Activated naive CD4-positive, alpha-beta T cell treated with anti-CD3 and anti-CD28 coated beads for 36 hours (primary cell): ENCODE measurements at regions of chr1 and their contacts with region 1.

Region 1: DNA sequence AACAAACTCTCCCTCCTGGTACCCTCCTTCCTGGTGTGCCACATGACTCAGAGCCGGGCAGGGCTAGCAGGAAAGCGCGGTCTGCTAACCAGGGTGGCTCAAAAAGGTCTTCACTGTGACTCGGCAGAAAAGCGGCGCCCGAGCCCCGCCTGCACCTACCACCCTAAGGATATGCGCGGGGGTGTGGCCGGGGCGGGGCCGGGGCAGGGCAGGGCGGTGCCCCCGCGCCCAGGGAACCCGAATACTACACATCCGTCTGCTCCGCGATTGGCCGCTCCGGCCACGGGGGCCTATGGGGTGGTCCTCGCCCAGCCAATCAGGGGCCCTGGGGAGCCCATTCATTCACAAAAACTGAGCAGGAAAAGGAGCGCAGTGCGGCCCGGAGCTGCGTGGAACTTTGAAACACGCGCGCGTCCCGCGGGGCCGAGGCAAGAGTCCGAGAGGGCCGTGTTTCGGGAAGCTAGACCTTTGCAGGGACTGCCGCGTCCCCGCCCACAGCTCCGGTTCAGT is 1.7 kb downstream of the LRP8 start:
- DNase-seq: peak; percentile 96
- H3K4me3 Mint-ChIP-seq: peak overlapping the region; percentile 95
- H3K27ac Mint-ChIP-seq: peak overlapping the region; percentile 94
- H3K4me1 Mint-ChIP-seq: peaks cover 18% of the 10 kb centered on the region
- H3K27me3 Mint-ChIP-seq: no peaks in the 10 kb centered on the region

Region 2: DNA sequence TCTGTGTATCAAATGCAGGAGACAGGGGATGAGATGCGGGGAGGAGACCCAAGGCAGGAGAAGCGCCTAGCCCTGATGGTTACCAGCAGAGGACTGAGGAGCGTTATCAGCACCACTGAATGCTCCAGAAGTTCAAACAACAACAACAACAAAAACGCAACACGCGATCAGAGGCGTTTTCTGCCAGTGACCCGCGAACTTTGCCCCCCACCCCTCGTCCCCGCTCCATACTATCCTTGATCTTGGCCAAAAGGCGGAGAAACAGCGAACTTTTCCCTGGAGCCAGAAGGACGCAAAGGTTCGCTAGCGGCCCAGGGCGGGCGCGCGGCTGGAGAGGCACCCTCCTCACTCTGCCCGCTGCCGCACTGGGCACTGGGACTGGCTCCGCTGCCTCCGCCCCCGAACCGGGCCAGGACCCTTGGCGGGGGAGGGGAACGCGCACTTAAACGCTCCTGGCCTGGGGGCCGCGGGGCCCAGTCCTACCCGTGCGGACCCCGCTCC is 405.3 kb before region 1 on chr1:
- CTCF ChIA-PET with region 1: no interaction called
- intact Hi-C with region 1: loop called (anchors 2 kb)
- DNase-seq: no peak
- H3K4me3 Mint-ChIP-seq: peak overlapping the region; percentile 78
- H3K27ac Mint-ChIP-seq: no peak overlapping the region
- H3K4me1 Mint-ChIP-seq: peaks cover 27% of the 10 kb centered on the region
- H3K27me3 Mint-ChIP-seq: no peaks in the 10 kb centered on the region

Region 3: DNA sequence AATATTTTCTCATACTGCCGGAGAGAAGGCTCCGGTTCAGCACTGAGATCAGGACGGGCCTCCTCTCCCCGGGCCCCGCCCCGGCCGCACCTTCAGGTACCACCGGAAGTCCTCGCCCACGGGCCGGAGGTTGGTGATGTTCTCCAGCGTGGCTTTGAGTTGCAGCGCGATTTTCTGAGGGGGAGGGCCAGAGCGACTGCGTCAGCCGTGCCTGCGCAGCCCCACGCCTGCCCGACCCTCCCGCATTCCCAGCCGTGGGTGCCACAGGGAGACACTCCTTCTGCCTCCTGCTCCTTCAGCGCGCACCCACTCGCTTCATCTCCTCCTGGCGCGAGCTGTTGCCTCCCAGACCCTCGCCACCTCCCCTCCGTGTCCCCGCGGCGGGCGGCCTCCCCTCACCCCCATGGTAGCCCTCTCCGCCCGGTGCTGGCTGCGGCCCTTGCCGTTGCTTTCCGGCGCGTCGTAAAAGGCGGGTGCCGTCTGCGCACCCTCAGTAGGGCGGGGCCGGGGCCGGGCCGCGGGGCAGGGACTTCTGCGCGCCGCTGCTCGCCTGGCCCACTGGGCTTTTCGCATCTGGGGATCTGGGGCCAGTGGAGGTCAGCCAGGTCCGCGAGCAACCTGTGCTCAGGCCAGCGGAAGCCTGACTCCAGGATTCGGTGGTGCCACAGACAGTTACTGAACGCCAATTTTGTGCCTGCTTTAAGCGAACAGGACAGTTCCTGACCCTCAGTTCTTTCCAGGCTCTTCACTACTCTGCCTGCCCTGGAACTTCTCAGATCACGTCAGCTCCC is 105.8 kb before region 1 on chr1 and contains the start of gene CZIB:
- CTCF ChIA-PET with region 1: no interaction called
- intact Hi-C with region 1: loop called (anchors 1 kb)
- DNase-seq: peak; percentile 96
- H3K4me3 Mint-ChIP-seq: peak within 1 kb of the TSS; percentile 91
- H3K27ac Mint-ChIP-seq: peak within 1 kb of the TSS; percentile 95
- H3K4me1 Mint-ChIP-seq: peaks cover 24% of the 10 kb centered on the region
- H3K27me3 Mint-ChIP-seq: no peaks in the 10 kb centered on the region
- total RNA-seq, gene CZIB: 44.4 to 45.6 TPM

Region 4: GRCh38 chr1:53294567-53294966 is 31.6 kb before region 1 on chr1:
- CTCF ChIA-PET with region 1: no interaction called
- intact Hi-C with region 1: loop called (anchors 1 kb)
- DNase-seq: peak; percentile 80
- H3K4me3 Mint-ChIP-seq: no peak overlapping the region
- H3K27ac Mint-ChIP-seq: peak overlapping the region; percentile 41
- H3K4me1 Mint-ChIP-seq: peaks cover 27% of the 10 kb centered on the region
- H3K27me3 Mint-ChIP-seq: no peaks in the 10 kb centered on the region

Region 5: GRCh38 chr1:53393325-53393792 is 67.2 kb after region 1 on chr1:
- CTCF ChIA-PET with region 1: interaction called, 9 read pairs
- intact Hi-C with region 1: loop called (anchors 1 kb)
- DNase-seq: peak; percentile 75
- H3K4me3 Mint-ChIP-seq: no peak overlapping the region
- H3K27ac Mint-ChIP-seq: no peak overlapping the region
- H3K4me1 Mint-ChIP-seq: no peaks in the 10 kb centered on the region
- H3K27me3 Mint-ChIP-seq: no peaks in the 10 kb centered on the region

Region 6: DNA sequence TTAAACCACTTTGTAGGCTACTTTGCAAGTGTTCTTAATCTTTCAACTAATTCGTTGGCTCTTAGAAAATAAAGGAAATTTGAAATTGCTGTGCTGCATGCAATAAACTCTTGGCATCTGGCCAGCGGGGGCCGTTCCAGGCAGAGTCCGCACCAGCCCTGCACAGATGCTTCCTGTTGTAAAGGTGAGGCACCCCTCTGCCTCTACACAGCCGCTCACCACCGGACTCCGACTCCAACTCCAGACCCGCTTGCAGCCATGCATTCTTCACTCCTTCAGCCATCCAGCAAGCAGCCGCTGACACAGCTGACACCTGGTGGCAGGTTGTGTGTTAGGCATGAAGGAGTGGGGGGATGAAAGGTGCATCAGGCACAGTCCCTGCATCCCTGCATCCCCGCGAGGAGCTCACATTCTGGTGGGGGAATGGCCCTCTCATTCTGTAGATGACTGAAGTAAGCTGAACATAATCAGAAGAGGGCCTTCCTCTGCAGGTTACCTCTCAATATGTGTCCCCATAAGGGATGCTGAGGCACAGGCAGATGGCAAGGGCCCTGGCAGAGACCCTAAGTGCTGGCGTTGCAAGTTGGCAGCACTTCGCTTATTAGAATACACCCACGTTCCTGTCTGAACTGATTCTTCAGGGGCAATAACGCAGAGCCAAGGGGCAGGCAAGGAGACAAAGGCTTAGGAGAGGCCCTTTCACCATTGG is 356.0 kb after region 1 on chr1:
- CTCF ChIA-PET with region 1: no interaction called
- intact Hi-C with region 1: no loop called
- DNase-seq: peak; percentile 67
- H3K4me3 Mint-ChIP-seq: no peak overlapping the region
- H3K27ac Mint-ChIP-seq: no peak overlapping the region
- H3K4me1 Mint-ChIP-seq: peaks cover 6% of the 10 kb centered on the region
- H3K27me3 Mint-ChIP-seq: no peaks in the 10 kb centered on the region

Region 7: DNA sequence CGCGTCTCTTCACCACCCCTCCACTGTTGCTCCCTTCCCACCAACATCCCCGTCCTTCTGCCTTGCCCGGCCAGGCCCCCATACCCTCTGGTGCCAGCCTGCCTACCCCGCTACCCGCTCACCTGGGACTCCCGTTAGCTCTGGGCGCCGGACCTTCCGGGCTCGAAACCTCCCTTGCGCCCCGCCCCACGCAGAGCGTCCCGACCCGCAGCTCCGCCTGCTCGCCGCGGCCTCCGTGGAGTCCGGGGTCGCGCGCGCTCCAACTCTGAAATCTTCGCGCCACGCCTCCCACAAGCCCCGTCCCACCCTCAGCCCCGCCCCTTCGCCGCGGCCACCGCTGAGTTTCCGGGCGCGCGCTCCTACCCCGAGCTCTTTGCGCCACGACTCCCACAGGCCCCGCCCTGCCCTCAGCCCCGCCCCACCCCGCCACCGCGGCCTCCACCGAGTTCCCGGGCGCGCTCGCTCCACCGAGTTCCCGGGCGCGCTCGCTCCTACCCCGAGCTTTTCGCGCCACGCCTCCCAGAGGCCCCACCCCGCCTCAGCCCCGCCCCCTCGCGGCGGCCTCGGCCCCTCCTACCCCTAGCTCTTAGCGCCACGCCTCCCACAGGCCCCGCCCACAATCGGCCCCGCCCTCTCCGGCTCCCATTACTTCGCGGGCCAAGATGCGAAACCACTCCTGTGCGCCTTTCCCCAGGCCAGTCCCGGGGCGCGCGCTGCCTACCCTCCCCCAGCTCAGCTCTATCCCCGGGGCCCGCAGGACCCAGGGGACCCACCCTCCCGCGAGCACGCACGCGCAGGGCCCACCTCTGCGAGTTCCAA is 619.5 kb after region 1 on chr1 and contains the start of gene IFT25:
- CTCF ChIA-PET with region 1: no interaction called
- intact Hi-C with region 1: loop called (anchors 1 kb)
- DNase-seq: peak; percentile 99
- H3K4me3 Mint-ChIP-seq: peak within 1 kb of the TSS; percentile 90
- H3K27ac Mint-ChIP-seq: peak within 1 kb of the TSS; percentile 87
- H3K4me1 Mint-ChIP-seq: peaks cover 45% of the 10 kb centered on the region
- H3K27me3 Mint-ChIP-seq: no peaks in the 10 kb centered on the region
- total RNA-seq, gene IFT25: 46.2 to 48.7 TPM